ENCODE measurements at regions of chr12 and their contacts with region 1.

Region 1: GRCh38 chr12:12010277-12011039 is 60.3 kb upstream of the BCL2L14 start:
- DNase-seq: peak in 3 of 4 donors; percentile 13 to 89 (median 85)
- ATAC-seq: peak; percentile 64
- H3K4me3 ChIP-seq: peak overlapping the region in 1 of 2 donors; percentile 13
- H3K27ac ChIP-seq: peak overlapping the region; percentile 70 to 90
- H3K4me1 ChIP-seq: peaks cover 3 to 41% of the 10 kb centered on the region in 2 donors
- H3K27me3 ChIP-seq: no peaks in the 10 kb centered on the region
- CTCF ChIP-seq: no peak

Region 2: DNA sequence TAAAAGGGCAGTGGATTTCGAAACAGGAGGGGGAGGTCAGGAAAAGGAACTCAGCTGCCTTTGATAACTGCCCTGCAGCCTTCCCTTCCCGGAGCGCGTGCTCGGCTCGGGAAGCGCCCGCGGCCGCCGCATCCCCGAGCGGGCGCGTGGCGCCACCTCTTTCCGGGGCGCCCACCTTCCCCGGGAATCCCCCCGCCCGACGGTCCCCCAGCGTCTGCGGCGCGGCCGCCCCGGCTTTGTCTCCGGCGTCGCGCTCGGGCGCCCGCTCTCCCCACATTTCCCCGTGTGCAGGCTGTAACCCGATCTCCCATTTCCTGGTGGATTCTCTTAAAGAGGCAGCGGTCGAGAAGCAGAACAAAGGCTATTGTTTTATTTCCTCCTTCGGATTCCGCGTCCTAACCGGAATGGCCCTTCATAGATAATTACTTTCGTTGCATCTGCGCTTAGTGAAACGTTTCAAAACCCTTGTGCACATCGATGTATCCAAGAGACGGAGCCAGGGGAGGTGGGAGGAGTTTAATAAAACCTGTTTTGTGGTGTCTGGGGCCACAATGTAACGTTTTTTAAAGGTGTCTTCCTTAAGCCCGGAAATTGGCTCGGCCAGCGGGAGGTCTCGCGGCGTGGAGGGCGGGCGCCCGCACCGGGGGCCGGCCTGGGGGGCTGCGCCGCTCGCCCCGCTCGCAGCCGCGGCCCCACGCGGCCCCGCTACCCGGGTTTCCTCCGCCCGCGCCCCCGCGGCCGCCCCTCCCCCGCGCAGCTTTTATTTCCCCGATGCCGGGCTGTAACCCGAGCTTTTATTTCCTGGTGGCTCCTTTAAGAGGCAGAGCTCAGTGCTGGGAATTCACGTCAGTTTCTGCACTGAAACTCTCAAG is 361.4 kb before region 1 on chr12 and contains the start of gene ETV6:
- intact Hi-C with region 1: loop called in 1 of 2 experiments (anchors 10 kb)
- DNase-seq: peak; percentile 74 to 92 (median 88)
- ATAC-seq: peak; percentile 58
- H3K4me3 ChIP-seq: peak within 1 kb of the TSS; percentile 60 to 77
- H3K27ac ChIP-seq: peak within 1 kb of the TSS; percentile 96 to 99
- H3K4me1 ChIP-seq: peaks cover 18 to 35% of the 10 kb centered on the region in 2 donors
- H3K27me3 ChIP-seq: no peaks in the 10 kb centered on the region
- CTCF ChIP-seq: no peak
- polyA plus RNA-seq, gene ETV6: 16.0 to 18.2 (median 16.6) TPM

Region 3: DNA sequence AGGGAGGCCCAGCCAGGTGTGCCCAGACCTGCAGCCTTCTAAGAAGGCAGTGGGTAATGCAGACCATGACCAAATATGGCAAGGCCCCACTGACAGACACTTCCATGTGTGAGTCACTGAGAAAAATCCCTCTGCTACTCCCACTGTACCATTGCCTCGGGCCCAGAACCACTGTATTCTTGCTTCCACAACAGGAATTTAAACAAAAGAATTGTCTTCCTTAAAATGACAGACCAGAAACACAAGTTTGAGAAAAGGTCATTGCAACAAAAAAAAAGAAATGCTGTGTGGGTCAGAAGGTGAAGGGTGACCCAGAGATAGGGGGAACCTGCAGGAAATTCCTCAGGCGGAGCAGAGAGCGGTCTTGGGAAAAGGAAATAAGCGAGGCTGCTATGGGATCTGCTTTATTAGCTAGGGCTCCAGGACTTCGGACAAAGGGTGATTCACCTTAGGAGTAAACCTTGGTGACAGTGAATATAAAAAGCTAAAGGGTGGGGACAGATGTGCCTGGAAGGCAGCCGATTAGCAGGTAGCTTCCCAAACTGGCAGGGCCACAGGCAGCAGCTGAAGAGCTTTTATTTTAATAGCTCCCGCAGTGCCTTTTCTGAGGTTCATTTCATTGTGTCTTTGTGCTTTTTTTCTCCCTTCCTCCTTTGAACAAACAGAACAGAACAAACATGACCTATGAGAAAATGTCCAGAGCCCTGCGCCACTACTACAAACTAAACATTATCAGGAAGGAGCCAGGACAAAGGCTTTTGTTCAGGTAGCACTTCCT is 125.0 kb before region 1 on chr12:
- intact Hi-C with region 1: loop called in 1 of 2 experiments (anchors 10 kb)
- DNase-seq: no peak
- ATAC-seq: peak; percentile 78
- H3K4me3 ChIP-seq: no peak overlapping the region
- H3K27ac ChIP-seq: peak overlapping the region; percentile 63 to 84
- H3K4me1 ChIP-seq: peaks cover 10 to 34% of the 10 kb centered on the region in 2 donors
- H3K27me3 ChIP-seq: no peaks in the 10 kb centered on the region
- CTCF ChIP-seq: no peak